ENCODE measurements at regions of chr17 and their contacts with region 1.

Region 1: DNA sequence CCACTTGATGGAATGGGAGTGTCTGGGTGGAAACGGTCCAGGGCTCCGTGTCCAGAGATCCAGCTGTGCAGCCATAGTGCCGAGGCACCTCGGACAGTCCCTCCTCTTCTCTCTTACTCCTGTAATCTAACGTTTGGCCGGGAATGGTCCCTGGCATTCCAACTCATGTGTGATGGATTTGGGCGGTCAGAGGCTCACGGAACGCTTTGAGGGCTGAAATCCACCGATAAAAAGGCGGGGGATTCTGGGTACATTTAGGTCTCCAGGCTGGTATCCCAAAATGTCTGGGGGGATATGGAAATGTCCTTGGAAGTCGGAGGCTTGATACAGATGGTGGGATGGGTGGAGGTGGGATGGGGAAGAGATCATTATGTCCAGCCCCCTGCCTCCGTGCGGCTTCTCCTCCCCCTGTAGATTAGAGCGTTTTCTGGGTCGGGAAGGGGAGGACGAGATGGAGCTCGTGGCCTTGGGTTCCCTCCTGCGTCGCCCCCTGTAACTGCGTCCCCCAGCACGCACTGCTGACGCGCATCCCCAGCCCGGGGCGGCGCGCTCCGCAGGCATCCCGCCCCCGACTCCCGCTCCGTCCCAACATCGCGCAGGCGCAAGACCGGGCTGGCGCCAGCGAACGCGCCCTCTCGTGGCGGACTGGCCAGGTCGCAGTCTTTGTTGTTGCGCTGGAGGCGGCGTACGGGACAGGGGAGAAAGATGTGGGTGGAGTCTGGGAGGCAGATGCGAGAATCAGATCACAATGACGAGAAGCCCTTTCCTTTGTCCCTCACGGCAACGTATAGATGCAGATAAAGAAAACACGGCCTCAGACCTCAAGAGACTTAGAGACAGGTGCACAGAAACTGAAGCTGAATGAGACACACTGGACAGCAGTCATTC is 4.5 kb upstream of the SGCA start:
- DNase-seq: peak; percentile 93 to 96 (median 93)
- H3K4me3 ChIP-seq: peak overlapping the region; percentile 78
- H3K4me3 Mint-ChIP-seq: peak overlapping the region; percentile 1 to 82 (median 54)
- H3K27ac ChIP-seq: no peak overlapping the region
- H3K27ac Mint-ChIP-seq: peak overlapping the region; percentile 21 to 96 (median 89)
- H3K4me1 ChIP-seq: peaks cover 34% of the 10 kb centered on the region
- H3K4me1 Mint-ChIP-seq: peaks cover 24 to 32% (median 29%) of the 10 kb centered on the region in 3 donors
- H3K27me3 ChIP-seq: no peaks in the 10 kb centered on the region
- H3K27me3 Mint-ChIP-seq: peaks cover 0 to 3% of the 10 kb centered on the region in 2 donors

Region 2: GRCh38 chr17:50114849-50115357 is 46.4 kb before region 1 on chr17:
- CTCF ChIA-PET with region 1: interaction called, 20 read pairs
- POLR2A ChIA-PET with region 1: no interaction called
- DNase-seq: no peak
- H3K4me3 ChIP-seq: no peak overlapping the region
- H3K4me3 Mint-ChIP-seq: peak overlapping the region in 1 of 7 donors; percentile 4
- H3K27ac ChIP-seq: no peak overlapping the region
- H3K27ac Mint-ChIP-seq: peak overlapping the region in 3 of 8 donors; percentile 10 to 69 (median 49)
- H3K4me1 ChIP-seq: no peaks in the 10 kb centered on the region
- H3K4me1 Mint-ChIP-seq: peaks cover 5 to 11% (median 5%) of the 10 kb centered on the region in 3 donors
- H3K27me3 ChIP-seq: peaks cover 5% of the 10 kb centered on the region
- H3K27me3 Mint-ChIP-seq: peaks cover 13 to 44% of the 10 kb centered on the region in 2 donors

Region 3: DNA sequence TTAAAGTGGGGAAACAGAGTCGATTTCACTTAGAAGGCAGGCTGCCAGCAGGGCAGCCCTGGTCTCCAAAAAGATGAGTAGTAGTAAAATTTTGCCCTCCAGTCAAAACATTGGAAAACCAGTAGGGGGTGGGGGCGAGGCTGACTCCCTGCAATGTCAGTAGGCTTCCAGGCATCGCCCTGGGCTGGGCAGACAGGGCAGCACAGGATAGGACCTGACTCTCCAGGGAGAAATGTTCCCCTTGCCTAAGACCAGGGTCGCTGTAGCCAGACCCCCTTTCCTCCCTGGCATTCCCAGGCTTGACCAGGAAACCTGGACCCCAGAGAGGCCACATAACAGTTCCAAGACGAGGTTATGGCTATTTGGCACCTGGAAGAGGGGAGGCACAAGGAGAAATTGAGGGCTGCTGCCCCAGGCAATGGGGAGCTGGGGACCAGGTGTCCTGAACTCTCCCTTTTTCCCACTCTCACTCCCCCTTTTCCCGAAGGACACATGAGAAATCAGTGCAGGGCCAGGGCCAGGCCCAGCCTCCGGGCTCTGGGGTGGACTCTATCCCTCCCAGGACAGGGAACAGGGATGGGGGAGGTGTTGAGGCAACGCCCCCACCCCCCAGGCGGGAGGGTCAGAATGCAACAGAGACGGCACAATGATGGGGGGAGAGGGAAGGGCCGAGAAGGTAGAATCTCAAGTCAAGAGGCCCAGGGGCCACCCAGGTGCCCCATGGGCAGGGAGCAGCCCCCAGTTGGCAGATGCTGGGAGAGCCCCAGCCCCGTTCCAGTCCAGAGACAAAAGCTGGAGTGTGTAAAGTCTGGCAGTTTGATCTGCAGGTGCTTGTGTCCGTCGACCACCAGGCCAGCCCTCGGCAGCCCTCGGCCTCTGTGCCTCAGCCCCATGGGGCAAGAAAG is 26.8 kb before region 1 on chr17:
- CTCF ChIA-PET with region 1: interaction called, 52 read pairs
- POLR2A ChIA-PET with region 1: interaction called, 3 read pairs
- DNase-seq: no peak
- H3K4me3 ChIP-seq: no peak overlapping the region
- H3K4me3 Mint-ChIP-seq: no peak overlapping the region
- H3K27ac ChIP-seq: no peak overlapping the region
- H3K27ac Mint-ChIP-seq: peak overlapping the region in 2 of 8 donors; percentile 63 to 74
- H3K4me1 ChIP-seq: peaks cover 10% of the 10 kb centered on the region
- H3K4me1 Mint-ChIP-seq: peaks cover 10 to 43% (median 30%) of the 10 kb centered on the region in 3 donors
- H3K27me3 ChIP-seq: no peaks in the 10 kb centered on the region
- H3K27me3 Mint-ChIP-seq: peaks cover 1 to 5% of the 10 kb centered on the region in 2 donors

Region 4: DNA sequence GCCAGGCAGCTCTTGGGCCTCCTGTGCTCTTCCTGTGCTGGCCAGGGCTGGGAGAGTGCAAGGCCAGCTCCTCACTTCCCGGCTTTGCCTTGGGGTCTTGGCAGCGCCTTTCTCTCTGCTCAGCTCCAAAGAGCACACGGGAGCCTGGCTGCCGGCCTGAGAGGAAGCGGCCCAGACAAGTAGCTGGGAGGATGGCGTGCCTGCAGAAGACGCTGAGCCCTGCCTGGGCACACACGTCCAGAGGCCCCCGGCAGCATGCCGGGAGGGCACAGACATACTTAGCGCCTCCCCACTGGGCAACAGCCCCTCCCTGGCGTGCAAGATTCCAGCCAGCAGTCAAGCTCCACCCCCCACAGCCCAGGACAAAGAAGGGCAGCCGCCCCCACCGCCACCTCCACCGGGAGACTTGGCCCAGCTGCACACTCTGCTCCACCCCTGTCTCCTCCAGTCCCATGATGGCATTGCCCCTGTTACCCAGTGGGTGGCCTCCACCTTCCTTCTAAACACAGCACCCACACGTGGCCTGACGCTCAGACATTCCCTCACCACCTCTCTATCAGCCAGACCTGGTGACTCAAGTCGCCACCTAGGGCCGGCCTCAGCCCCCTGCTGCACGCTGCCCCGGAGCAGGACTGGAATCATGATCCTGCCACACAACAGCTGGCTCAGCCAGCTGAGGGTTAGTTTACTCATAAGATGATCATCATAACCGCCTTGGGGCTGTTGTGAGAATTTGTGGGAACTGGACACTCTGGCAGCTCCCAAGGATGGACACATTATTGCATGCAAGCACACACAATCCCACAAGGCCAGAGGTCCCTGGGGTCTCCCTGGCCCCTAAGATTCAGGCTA is 16.9 kb after region 1 on chr17:
- CTCF ChIA-PET with region 1: interaction called, 12 read pairs
- POLR2A ChIA-PET with region 1: no interaction called
- DNase-seq: peak in 4 of 5 donors; percentile 11 to 59 (median 23)
- H3K4me3 ChIP-seq: no peak overlapping the region
- H3K4me3 Mint-ChIP-seq: peak overlapping the region in 2 of 7 donors; percentile 63 to 80
- H3K27ac ChIP-seq: no peak overlapping the region
- H3K27ac Mint-ChIP-seq: peak overlapping the region in 3 of 8 donors; percentile 20 to 64 (median 26)
- H3K4me1 ChIP-seq: peaks cover under 1% of the 10 kb centered on the region
- H3K4me1 Mint-ChIP-seq: peaks cover 7 to 11% (median 10%) of the 10 kb centered on the region in 3 donors
- H3K27me3 ChIP-seq: no peaks in the 10 kb centered on the region
- H3K27me3 Mint-ChIP-seq: no peaks in the 10 kb centered on the region

Region 5: DNA sequence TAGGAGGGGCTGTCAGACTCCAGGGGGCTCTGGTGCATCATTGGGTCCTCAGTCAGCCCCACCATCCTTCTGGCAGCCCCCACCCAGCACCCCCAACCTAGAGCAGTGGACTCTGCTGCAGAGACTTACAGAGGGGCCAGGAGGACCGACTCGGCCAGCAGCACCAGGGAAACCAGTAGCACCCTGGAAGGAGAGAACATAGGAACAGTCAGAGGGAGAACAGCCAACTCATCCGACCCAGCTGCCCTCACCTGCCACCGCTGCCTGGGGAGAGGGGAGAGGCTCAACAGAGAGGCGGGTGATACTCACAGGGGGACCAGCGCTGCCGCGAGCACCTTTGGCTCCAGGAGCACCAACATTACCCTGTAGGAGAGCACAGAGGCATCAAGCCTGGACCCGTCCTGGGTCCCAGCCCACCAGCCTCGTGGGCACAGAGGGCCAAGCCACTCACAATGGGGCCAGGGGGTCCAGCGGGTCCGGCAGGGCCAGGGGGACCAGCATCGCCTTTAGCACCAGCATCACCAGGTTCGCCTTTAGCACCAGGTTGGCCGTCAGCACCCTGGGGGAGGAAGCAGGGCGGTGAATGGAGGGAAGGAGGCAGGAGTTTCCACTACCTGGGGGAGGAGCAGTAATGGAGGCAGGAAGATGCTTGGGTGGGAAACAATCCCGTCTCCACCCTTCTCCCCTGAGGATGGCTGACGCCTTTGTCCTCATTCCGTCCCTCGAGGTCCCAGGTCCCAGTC is 28.5 kb after region 1 on chr17:
- CTCF ChIA-PET with region 1: no interaction called
- POLR2A ChIA-PET with region 1: no interaction called
- DNase-seq: no peak
- H3K4me3 ChIP-seq: no peak overlapping the region
- H3K4me3 Mint-ChIP-seq: no peak overlapping the region
- H3K27ac ChIP-seq: no peak overlapping the region
- H3K27ac Mint-ChIP-seq: no peak overlapping the region
- H3K4me1 ChIP-seq: no peaks in the 10 kb centered on the region
- H3K4me1 Mint-ChIP-seq: peaks cover 0 to 2% (median 0%) of the 10 kb centered on the region in 3 donors
- H3K27me3 ChIP-seq: no peaks in the 10 kb centered on the region
- H3K27me3 Mint-ChIP-seq: peaks cover 0 to 2% of the 10 kb centered on the region in 2 donors